K562 (cell line): ENCODE measurements at regions of chr3 and their contacts with region 1.

Region 1: GRCh38 chr3:137013955-137014688 is 56.3 kb downstream of the IL20RB start:
- DNase-seq: peak; percentile 77 to 88 (median 80)
- ATAC-seq: peak; percentile 93
- H3K4me3 ChIP-seq: peak overlapping the region; percentile 36
- H3K27ac ChIP-seq: peak overlapping the region; percentile 82
- H3K4me1 ChIP-seq: peaks cover 4 to 7% of the 10 kb centered on the region in 2 experiments; a peak in 3 of 5 replicates
- H3K27me3 ChIP-seq: no peaks in the 10 kb centered on the region
- CTCF ChIP-seq: peak; percentile 79 to 87 (median 81)
- EP300 ChIP-seq: no peak
- POLR2A ChIP-seq: peak; percentile 46; the same call in 1 of the 2 replicates
- RAD21 ChIP-seq: peak; percentile 83 to 88

Region 2: DNA sequence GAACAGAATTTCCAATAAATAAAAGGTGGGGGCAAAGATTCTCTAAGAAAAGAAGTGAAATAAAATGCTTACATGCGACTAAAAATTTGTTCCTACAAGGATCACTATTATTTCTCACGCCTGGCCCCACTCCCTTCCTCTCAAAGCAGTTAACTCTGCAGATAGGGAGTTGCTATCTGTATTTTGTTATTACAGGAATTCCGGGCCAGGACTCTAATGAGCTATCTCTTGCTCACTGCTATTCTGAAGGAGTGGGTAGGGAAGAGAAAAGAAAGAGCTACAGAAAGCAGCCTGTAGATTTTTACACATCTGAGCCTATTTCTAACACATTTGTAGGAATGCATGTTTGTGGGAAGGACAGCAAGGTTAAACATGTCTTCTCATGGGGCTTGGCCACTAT is 623.5 kb before region 1 on chr3:
- CTCF ChIA-PET with region 1: no interaction called
- POLR2A ChIA-PET with region 1: no interaction called
- in situ Hi-C with region 1: loop called (anchors 25 kb)
- intact Hi-C with region 1: loop called (anchors 5 kb)
- DNase-seq: no peak
- ATAC-seq: no peak
- H3K4me3 ChIP-seq: no peak overlapping the region
- H3K27ac ChIP-seq: no peak overlapping the region
- H3K4me1 ChIP-seq: no peaks in the 10 kb centered on the region
- H3K27me3 ChIP-seq: no peaks in the 10 kb centered on the region
- CTCF ChIP-seq: no peak
- EP300 ChIP-seq: no peak
- POLR2A ChIP-seq: no peak
- RAD21 ChIP-seq: no peak

Region 3: GRCh38 chr3:136617198-136617597 is 396.9 kb before region 1 on chr3:
- CTCF ChIA-PET with region 1: no interaction called
- POLR2A ChIA-PET with region 1: no interaction called
- in situ Hi-C with region 1: no loop called
- intact Hi-C with region 1: loop called (anchors 5 kb)
- DNase-seq: peak in 2 of 4 experiments; percentile 35 to 50
- ATAC-seq: peak; percentile 92
- H3K4me3 ChIP-seq: no peak overlapping the region
- H3K27ac ChIP-seq: peak overlapping the region; percentile 63
- H3K4me1 ChIP-seq: peaks cover 3 to 12% of the 10 kb centered on the region in 2 experiments; a peak in 3 of 5 replicates
- H3K27me3 ChIP-seq: no peaks in the 10 kb centered on the region
- CTCF ChIP-seq: peak in 2 of 3 experiments; percentile 23 to 40; a peak in 2 of 6 replicates
- EP300 ChIP-seq: no peak
- POLR2A ChIP-seq: no peak
- RAD21 ChIP-seq: peak; percentile 14 to 68; a peak in 2 of 4 replicates

Region 4: DNA sequence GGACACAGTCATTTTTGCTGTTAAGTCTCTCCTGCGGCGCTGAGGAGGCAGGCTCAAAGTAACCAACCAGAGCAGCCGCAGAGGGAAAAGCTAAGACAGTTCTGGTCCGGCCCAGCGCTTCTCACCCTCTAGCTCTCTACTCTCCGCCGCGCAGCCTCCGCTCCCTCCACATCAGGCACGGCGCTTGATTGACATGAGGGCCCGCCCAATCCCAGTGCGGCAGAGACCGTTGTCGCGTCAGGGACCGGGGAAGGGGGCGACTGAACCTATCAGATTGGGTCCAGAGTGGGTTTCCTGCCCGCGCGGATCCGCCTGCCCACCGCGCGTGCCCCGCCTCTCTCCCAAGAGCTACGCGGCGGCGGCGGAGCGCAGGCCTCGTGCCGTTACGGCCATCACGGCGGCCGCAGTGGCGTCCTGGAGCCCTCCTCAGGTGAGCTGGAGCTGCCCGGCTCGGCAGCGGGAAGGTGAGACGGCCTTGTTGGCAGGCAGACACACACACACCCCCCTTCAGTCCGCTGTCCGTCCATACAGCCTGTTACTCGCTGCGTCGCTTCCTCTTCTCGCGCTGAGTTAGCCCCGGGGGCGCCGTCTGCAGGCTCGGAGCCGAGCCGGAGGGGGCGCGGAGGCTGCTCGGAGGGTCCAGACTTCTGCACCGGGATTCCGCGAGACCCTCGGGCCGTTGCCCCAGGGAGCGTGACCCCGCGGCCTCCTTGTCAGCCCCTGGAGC is 152.1 kb before region 1 on chr3 and contains the start of gene NCK1:
- CTCF ChIA-PET with region 1: no interaction called
- POLR2A ChIA-PET with region 1: no interaction called
- in situ Hi-C with region 1: no loop called
- intact Hi-C with region 1: loop called (anchors 2 kb)
- DNase-seq: peak; percentile 93 to 96 (median 94)
- ATAC-seq: peak; percentile 96
- H3K4me3 ChIP-seq: peak within 1 kb of the TSS; percentile 97
- H3K27ac ChIP-seq: peak within 1 kb of the TSS; percentile 94
- H3K4me1 ChIP-seq: peaks cover 8 to 16% of the 10 kb centered on the region in 2 experiments; a peak in 4 of 5 replicates
- H3K27me3 ChIP-seq: no peaks in the 10 kb centered on the region
- CTCF ChIP-seq: no peak; a peak in 1 of 6 replicates
- EP300 ChIP-seq: no peak
- POLR2A ChIP-seq: peak; percentile 88
- RAD21 ChIP-seq: no peak
- polyA plus RNA-seq, gene NCK1: 17.3 to 24.4 TPM